CD8-positive, alpha-beta T cell (primary cell): ENCODE measurements at regions of chr17 and their contacts with region 1.

Region 1: GRCh38 chr17:30894236-30894635 is 11.8 kb downstream of the TEFM start:
- DNase-seq: no peak
- ATAC-seq: no peak
- H3K4me3 ChIP-seq: no peak overlapping the region
- H3K4me3 Mint-ChIP-seq: no peak overlapping the region
- H3K27ac ChIP-seq: no peak overlapping the region
- H3K27ac Mint-ChIP-seq: peak overlapping the region; percentile 4
- H3K4me1 ChIP-seq: no peaks in the 10 kb centered on the region
- H3K4me1 Mint-ChIP-seq: no peaks in the 10 kb centered on the region
- H3K27me3 ChIP-seq: no peaks in the 10 kb centered on the region
- H3K27me3 Mint-ChIP-seq: no peaks in the 10 kb centered on the region
- CTCF ChIP-seq: no peak

Region 2: DNA sequence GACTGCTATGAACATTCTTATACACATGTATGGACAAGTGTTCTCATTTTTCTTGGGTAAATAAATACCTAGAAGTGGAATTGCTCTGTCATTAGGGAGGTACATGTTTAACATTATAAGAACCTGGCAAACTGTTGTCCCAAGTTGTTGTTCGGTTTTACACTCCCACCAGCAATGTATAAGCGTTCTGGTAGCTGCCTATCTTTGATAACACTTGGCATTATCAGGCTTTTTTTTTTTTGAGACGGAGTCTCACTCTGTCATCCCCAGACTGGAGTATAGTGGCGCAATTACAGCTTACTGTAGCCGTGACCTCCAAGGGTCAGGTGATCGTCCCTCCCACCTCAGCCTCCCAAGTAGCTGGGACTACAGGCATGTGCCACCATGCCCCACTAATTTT is 46.2 kb before region 1 on chr17:
- CTCF ChIA-PET with region 1: no interaction called
- POLR2A ChIA-PET with region 1: no interaction called
- intact Hi-C with region 1: loop called in 1 of 2 experiments (anchors 1 kb)
- DNase-seq: no peak
- ATAC-seq: no peak
- H3K4me3 ChIP-seq: no peak overlapping the region
- H3K4me3 Mint-ChIP-seq: no peak overlapping the region
- H3K27ac ChIP-seq: no peak overlapping the region
- H3K27ac Mint-ChIP-seq: no peak overlapping the region
- H3K4me1 ChIP-seq: no peaks in the 10 kb centered on the region
- H3K4me1 Mint-ChIP-seq: no peaks in the 10 kb centered on the region
- H3K27me3 ChIP-seq: no peaks in the 10 kb centered on the region
- H3K27me3 Mint-ChIP-seq: no peaks in the 10 kb centered on the region
- CTCF ChIP-seq: no peak